A673 (cell line): ENCODE measurements at regions of chr12 and their contacts with region 1.

Region 1: GRCh38 chr12:56117778-56118687 is at the start of gene ZC3H10:
- DNase-seq: peak; percentile 99
- H3K4me3 ChIP-seq: peak within 1 kb of the TSS; percentile 71
- H3K27ac ChIP-seq: peak within 1 kb of the TSS; percentile 95
- H3K4me1 ChIP-seq: peaks cover 13% of the 10 kb centered on the region
- H3K27me3 ChIP-seq: no peaks in the 10 kb centered on the region
- CTCF ChIP-seq: peak; percentile 61; the same call in 1 of the 2 replicates
- total RNA-seq, gene ZC3H10: 11.8 and 14.4 TPM in 2 replicates

Region 2: DNA sequence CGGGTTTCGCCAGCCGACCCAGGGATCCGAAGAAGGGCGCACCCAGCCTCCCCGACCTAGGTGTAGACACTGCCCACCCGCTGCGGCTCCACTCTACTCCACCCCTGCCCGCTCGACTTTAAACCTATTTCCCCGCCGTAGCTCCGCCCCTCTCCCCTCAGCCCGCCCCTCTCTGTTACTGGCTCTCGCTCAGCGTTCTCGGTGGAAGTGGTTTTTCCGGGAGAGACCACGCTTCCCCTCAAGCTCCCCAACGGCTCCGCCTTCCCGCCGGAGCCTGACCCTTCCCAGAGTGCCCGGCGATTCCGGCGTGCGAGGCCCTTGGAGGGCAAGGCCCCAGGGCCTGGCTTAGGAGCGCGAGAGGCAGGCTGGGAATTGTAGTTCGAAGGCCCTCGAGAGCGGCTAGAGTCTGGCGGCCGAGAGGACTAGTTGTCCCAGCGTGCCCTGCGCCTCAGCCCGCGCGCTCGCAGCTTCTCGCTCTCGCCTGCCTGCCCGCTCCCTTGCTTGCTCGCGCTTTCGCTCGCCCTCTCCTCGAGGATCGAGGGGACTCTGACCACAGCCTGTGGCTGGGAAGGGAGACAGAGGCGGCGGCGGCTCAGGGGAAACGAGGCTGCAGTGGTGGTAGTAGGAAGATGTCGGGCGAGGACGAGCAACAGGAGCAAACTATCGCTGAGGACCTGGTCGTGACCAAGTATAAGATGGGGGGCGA is 13.8 kb before region 1 on chr12 and contains the start of gene PA2G4:
- CTCF ChIA-PET with region 1: interaction called, 3 read pairs
- POLR2A ChIA-PET with region 1: interaction called, 15 read pairs
- intact Hi-C with region 1: no loop called
- DNase-seq: peak; percentile 100
- H3K4me3 ChIP-seq: peak within 1 kb of the TSS; percentile 87
- H3K27ac ChIP-seq: peak within 1 kb of the TSS; percentile 94
- H3K4me1 ChIP-seq: peaks cover 11% of the 10 kb centered on the region
- H3K27me3 ChIP-seq: no peaks in the 10 kb centered on the region
- CTCF ChIP-seq: no peak
- total RNA-seq, gene PA2G4: 302 and 327 TPM in 2 replicates

Region 3: DNA sequence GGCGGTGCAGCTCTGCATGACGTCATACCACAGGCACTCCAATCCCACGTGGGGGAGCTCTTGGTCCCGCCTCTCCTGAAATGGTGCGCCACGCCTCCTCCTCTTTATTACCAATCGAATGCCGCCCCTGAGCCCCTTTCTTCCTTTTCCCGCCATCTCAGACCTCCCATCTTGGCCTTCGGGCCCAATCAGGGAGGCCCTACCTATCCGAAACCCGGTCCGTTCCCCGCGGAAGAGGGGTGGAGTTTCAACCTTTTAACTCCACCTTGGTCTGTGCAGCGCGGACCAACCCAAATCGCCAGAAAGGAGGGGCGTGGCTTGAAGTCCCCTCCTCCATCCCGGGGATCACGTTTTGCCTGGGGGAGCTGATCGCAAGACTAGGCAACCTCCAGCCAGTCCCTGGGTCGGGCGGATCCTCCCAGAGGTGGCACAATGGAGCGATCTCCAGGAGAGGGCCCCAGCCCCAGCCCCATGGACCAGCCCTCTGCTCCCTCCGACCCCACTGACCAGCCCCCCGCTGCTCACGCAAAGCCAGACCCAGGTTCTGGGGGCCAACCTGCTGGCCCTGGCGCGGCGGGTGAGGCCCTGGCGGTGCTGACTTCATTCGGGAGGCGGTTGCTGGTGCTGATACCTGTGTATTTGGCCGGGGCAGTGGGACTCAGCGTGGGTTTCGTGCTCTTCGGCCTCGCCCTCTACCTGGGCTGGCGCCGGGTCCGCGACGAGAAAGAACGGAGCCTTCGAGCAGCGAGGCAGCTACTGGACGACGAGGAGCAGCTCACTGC is 10.0 kb after region 1 on chr12 and contains the start of gene ESYT1:
- CTCF ChIA-PET with region 1: interaction called, 13 read pairs
- POLR2A ChIA-PET with region 1: interaction called, 4 read pairs
- intact Hi-C with region 1: no loop called
- DNase-seq: peak; percentile 100
- H3K4me3 ChIP-seq: peak within 1 kb of the TSS; percentile 72
- H3K27ac ChIP-seq: peak within 1 kb of the TSS; percentile 76
- H3K4me1 ChIP-seq: peaks cover 21% of the 10 kb centered on the region
- H3K27me3 ChIP-seq: no peaks in the 10 kb centered on the region
- CTCF ChIP-seq: no peak
- total RNA-seq, gene ESYT1: 90.0 and 107 TPM in 2 replicates

Region 4: DNA sequence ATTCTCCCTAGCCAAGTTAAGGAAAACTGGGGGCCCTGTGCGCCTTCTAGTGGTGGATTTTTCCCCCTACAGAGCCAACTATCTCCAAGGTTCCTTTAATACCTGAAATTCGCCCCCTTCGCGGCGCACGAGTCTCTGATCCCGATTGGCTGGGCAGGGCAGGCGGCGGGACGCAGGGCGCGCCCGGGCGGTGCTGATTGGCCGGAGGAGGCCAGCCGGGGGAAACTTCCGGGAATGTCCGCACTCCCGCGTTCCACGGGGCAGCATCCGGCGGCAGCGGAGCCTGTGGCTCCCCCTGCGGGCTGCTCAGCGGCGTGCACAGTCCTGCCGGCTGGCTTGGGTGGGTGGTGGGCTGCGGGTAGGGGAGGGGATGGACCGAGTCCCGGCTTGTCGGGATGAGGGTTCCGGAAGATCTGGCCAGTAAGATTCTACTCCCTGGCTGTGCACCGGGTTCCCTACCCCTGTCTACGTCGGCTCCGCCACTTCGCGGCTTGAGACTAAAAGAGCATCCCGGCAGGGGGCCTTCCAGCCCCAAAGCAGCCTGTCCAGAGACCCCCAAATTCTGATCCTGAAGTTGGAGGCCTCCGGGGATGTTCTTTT is 106.2 kb after region 1 on chr12 and contains the start of gene NABP2:
- CTCF ChIA-PET with region 1: no interaction called
- POLR2A ChIA-PET with region 1: no interaction called
- intact Hi-C with region 1: loop called (anchors 2 kb)
- DNase-seq: peak; percentile 99
- H3K4me3 ChIP-seq: peak within 1 kb of the TSS; percentile 65
- H3K27ac ChIP-seq: peak within 1 kb of the TSS; percentile 72
- H3K4me1 ChIP-seq: peaks cover 5% of the 10 kb centered on the region
- H3K27me3 ChIP-seq: no peaks in the 10 kb centered on the region
- CTCF ChIP-seq: peak; percentile 98
- total RNA-seq, gene NABP2: 67.5 and 73.2 TPM in 2 replicates

Region 5: GRCh38 chr12:56307221-56307965 is 189.4 kb after region 1 on chr12:
- CTCF ChIA-PET with region 1: no interaction called
- POLR2A ChIA-PET with region 1: no interaction called
- intact Hi-C with region 1: no loop called
- DNase-seq: no peak
- H3K4me3 ChIP-seq: no peak overlapping the region
- H3K27ac ChIP-seq: no peak overlapping the region
- H3K4me1 ChIP-seq: no peaks in the 10 kb centered on the region
- H3K27me3 ChIP-seq: no peaks in the 10 kb centered on the region
- CTCF ChIP-seq: no peak

Region 6: DNA sequence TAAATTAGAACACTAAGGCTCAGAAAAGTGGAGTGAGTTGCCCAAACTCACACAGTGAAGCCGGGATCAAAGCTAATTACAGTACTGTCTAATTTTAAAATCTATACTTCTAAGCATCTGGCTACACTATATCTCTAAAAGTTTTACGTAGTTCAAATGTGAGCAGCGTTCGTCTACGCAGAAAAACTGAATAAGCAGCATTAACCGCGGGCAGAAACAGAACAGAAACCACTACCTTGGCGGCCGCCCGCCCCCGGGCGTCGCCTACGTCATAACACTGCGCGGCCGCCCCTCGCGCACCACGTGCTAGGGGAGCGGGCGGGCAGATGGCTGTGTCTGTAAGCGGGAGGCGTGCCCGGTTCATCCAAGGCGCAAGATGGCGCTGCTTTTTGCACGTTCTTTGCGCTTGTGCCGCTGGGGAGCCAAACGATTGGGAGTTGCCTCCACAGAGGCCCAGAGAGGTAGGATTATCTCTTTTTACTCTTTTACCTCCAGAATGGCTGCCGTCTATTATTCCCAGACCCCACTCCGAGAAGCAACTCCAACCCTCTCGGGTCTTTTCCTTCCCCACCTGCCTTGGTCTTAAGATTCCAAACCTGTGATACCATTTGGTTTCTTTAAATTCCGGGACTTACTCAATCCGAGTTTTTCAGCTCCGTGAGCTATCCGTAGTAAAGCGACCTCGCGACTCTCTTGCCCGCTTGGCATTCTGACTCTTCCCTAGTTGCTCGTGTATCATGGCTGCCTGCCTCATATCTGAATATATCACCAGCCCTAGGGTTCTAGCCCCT is 350.4 kb after region 1 on chr12 and contains the start of gene SPRYD4:
- CTCF ChIA-PET with region 1: no interaction called
- POLR2A ChIA-PET with region 1: no interaction called
- intact Hi-C with region 1: loop called (anchors 2 kb)
- DNase-seq: peak; percentile 96
- H3K4me3 ChIP-seq: peak within 1 kb of the TSS; percentile 76
- H3K27ac ChIP-seq: peak within 1 kb of the TSS; percentile 94
- H3K4me1 ChIP-seq: peaks cover 7% of the 10 kb centered on the region
- H3K27me3 ChIP-seq: no peaks in the 10 kb centered on the region
- CTCF ChIP-seq: peak; percentile 60
- total RNA-seq, gene SPRYD4: 4.7 and 5.1 TPM in 2 replicates

Region 7: DNA sequence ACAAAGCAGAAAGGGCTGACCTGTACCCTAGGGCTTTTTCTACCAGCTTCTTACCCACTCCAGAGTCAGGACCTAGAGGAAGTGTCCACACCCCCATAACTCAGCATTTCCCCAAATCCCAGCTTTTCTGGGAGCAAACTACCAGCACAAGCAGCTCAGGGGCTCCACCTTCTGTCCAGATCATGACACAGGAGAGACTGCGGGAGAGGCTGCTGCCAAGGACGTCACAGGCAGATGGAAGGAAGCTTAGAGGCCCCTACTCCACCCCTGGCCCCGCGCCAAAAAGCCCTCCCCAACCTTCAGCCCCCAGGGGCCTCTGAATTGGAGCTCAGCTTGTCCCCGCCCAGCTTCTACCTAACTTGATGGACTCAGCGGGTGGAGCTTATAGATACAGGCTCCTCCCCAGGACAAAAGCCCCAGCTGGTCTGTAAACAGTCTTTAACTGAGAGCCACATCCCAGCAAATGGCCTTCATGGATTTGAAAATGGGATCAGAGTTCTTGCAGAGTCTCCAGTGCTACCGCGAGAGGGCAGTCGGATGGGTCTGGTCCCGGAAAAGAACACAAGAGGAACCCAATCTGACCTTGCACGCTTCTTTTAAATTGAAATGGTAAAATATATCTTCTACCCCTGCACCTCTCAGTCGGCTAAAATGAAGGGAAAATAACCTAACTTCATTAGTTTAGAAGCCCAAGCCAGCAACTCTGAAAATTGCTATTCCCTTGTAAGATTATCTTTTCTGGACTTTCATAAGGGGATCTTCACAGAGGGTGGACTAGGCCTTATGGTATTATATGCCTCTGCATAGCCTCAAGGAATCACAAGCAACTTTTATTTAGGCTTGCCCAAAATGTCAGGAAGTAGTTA is 518.9 kb after region 1 on chr12:
- CTCF ChIA-PET with region 1: no interaction called
- POLR2A ChIA-PET with region 1: no interaction called
- intact Hi-C with region 1: loop called (anchors 10 kb)
- DNase-seq: peak; percentile 100
- H3K4me3 ChIP-seq: peak overlapping the region; percentile 77
- H3K27ac ChIP-seq: peak overlapping the region; percentile 78
- H3K4me1 ChIP-seq: peaks cover 35% of the 10 kb centered on the region
- H3K27me3 ChIP-seq: no peaks in the 10 kb centered on the region
- CTCF ChIP-seq: peak; percentile 82

Region 8: DNA sequence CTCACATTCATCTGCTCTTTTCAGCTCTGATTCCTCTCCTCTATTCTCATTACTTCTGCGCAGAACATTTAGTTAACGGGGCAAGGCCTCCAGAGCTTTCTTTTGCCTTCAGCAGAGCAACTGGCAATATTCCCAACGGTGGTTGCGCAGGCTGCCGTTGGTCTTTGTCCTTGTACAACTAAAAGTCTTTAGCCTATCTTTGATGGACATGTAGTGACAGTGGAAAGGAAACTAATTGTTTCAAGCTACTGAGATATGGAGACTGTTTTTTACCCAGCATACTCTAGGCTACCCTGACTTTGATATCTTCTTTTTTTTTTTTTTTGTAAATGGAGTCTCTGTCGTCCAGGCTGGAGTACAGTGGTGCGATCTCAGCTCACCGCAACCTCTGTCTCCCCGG is 1300.2 kb after region 1 on chr12:
- CTCF ChIA-PET with region 1: no interaction called
- POLR2A ChIA-PET with region 1: no interaction called
- intact Hi-C with region 1: no loop called
- DNase-seq: no peak
- H3K4me3 ChIP-seq: no peak overlapping the region
- H3K27ac ChIP-seq: peak overlapping the region; percentile 1
- H3K4me1 ChIP-seq: no peaks in the 10 kb centered on the region
- H3K27me3 ChIP-seq: no peaks in the 10 kb centered on the region
- CTCF ChIP-seq: no peak